GM12878 (cell line): ENCODE measurements at regions of chr10 and their contacts with region 1.

Region 1: GRCh38 chr10:90879062-90879461 is 7.3 kb downstream of the RPP30 start:
- DNase-seq: no peak
- ATAC-seq: no peak
- H3K4me3 ChIP-seq: no peak overlapping the region
- H3K27ac ChIP-seq: no peak overlapping the region
- H3K4me1 ChIP-seq: 0 out of 2 replicates have a peak, but pooled peaks cover 7% of the 10 kb centered on the region
- H3K27me3 ChIP-seq: no peaks in the 10 kb centered on the region
- CTCF ChIP-seq: no peak
- EP300 ChIP-seq: no peak
- POLR2A ChIP-seq: no peak
- RAD21 ChIP-seq: no peak

Region 2: DNA sequence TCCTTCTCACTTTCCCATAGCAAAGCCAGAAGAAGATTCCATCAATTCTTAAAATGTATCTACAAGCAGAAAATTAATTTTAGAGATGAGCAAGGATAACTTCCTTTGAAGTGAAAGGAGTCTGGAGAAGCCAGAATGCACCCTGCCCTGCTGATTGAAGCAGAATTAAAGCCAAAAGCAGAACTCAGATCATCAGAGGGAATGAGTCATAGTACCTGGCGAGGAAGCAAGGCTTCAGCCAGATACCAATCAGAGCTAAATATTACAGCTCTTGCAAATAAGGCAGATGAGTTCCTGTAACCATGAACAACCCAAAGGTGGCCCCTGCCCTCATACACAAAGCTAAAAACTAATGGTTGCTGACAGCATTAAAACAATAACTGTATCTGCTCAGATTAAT is 31.6 kb before region 1 on chr10:
- CTCF ChIA-PET with region 1: no interaction called
- POLR2A ChIA-PET with region 1: no interaction called
- RAD21 ChIA-PET with region 1: no interaction called
- SMC1A ChIA-PET with region 1: no interaction called
- in situ Hi-C with region 1: no loop called
- intact Hi-C with region 1: no loop called
- DNase-seq: no peak
- ATAC-seq: peak; percentile 63
- H3K4me3 ChIP-seq: no peak overlapping the region
- H3K27ac ChIP-seq: no peak overlapping the region
- H3K4me1 ChIP-seq: no peaks in the 10 kb centered on the region
- H3K27me3 ChIP-seq: peaks cover 0 to 2% of the 10 kb centered on the region in 2 experiments; a peak in 1 of 4 replicates
- CTCF ChIP-seq: no peak
- EP300 ChIP-seq: no peak
- POLR2A ChIP-seq: no peak
- RAD21 ChIP-seq: no peak

Region 3: DNA sequence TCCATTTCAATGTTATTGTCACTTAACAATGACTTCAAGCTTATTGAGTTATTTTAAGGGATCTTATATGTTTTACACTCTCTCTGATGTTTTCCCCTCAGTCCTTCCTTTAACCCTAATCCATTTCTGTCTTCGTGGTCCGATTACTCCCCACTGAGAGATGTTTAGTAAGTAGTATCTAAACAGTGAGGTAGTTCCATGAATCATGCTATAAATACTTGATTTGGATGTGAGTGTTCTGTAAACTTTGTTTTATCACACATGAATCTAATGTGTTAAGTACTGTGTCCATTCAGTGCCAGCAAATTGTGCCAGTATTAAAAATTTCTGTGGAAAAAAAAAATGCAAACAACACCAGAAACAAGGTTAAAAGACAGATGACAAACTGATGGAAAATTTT is 11.3 kb after region 1 on chr10:
- CTCF ChIA-PET with region 1: interaction called, 15 read pairs
- POLR2A ChIA-PET with region 1: no interaction called
- RAD21 ChIA-PET with region 1: no interaction called
- SMC1A ChIA-PET with region 1: interaction called, 6 read pairs
- in situ Hi-C with region 1: no loop called
- intact Hi-C with region 1: no loop called
- DNase-seq: no peak
- ATAC-seq: no peak
- H3K4me3 ChIP-seq: no peak overlapping the region
- H3K27ac ChIP-seq: no peak overlapping the region
- H3K4me1 ChIP-seq: no peaks in the 10 kb centered on the region
- H3K27me3 ChIP-seq: no peaks in the 10 kb centered on the region
- CTCF ChIP-seq: no peak
- EP300 ChIP-seq: no peak
- POLR2A ChIP-seq: no peak
- RAD21 ChIP-seq: no peak